ENCODE measurements at regions of chr15 and their contacts with region 1.

Region 1: GRCh38 chr15:39804026-39804425 is 21.4 kb upstream of the FSIP1 start:
- DNase-seq: no peak

Region 2: DNA sequence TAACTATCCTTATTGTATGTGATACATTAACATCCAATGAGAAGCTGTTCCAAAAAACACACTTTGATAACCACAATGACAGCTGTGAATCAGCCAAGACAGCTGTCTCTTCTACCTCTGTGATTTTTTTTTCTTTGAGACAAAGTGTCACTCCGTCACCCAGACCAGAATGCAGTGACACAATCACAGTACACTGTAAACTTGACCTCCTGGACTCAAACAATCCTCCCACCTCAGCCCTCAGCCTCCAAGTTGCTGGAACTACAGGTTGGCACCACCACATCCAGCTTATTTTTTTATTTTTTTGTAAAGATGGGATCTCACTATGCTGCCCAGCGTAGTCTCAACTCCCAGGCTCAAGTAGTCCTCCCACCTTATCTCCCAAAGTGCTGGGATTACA is 1943.1 kb before region 1 on chr15:
- intact Hi-C with region 1: no loop called
- DNase-seq: no peak

Region 3: GRCh38 chr15:39920510-39921273 is 116.7 kb after region 1 on chr15:
- intact Hi-C with region 1: loop called in 1 of 2 experiments (anchors 10 kb)
- DNase-seq: peak; percentile 94

Region 4: GRCh38 chr15:39960411-39960810 is 156.4 kb after region 1 on chr15:
- intact Hi-C with region 1: loop called in 1 of 2 experiments (anchors 2 kb)
- DNase-seq: no peak

Measured in posterior vena cava (tissue), 2 donors.